Heart right ventricle (tissue), 16 donors: ENCODE measurements at regions of chr3 and their contacts with region 1.

Region 1: DNA sequence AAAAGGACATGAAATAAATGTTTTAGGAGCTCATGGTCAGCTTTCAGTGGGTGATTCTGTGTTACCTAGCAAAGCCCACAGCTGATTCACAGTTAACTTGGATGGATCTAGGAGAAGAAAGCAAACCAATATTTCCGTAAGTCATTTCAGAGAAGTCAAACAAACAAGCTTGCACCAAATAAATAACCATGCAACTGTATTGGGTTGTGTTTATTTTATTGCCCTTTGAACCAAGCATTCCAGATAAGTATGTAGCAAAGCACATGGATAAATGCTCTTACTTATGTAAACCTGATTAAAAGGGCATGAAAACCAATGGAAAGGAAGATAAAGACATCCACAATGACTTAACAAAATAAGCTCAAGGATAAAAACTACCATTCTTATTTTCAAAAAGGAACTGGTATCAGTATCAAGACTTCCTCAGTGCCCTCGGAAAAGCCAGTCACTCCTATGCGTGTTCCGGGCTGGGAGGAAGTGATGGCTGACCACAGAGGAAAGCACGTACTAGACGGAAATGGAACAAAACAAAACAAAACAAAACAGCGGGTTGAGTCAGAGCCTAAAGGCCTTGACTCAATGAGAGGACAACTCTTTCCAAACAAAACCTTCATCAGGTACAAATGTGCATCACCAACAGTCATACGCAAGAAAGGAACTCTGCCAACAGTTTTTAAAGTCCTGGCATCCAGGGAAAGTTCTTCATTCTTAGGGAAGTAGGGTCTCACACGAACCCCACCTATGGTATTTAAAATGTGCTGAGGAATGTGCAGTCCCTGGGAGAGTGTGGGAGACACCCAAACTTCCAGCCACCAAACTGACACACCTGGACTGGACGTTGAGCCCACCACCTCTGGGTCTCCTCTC is 103.3 kb downstream of the SNRK start:
- DNase-seq: peak in 1 of 2 donors; percentile 69
- ATAC-seq: peak; percentile 65 to 85 (median 76)
- H3K4me3 ChIP-seq: no peak overlapping the region
- H3K27ac ChIP-seq: peak overlapping the region; percentile 31 to 93 (median 82)
- H3K4me1 ChIP-seq: peaks cover 3 to 60% (median 41%) of the 10 kb centered on the region in 9 donors
- H3K27me3 ChIP-seq: no peaks in the 10 kb centered on the region
- CTCF ChIP-seq: no peak

Region 2: GRCh38 chr3:43477600-43477999 is 88.0 kb after region 1 on chr3:
- intact Hi-C with region 1: loop called in 1 of 10 experiments (anchors 5 kb)
- DNase-seq: peak; percentile 23 to 52
- ATAC-seq: peak; percentile 76 to 94 (median 88)
- H3K4me3 ChIP-seq: no peak overlapping the region
- H3K27ac ChIP-seq: peak overlapping the region in 9 of 10 donors; percentile 13 to 87 (median 54)
- H3K4me1 ChIP-seq: peaks cover 0 to 34% (median 15%) of the 10 kb centered on the region in 9 donors
- H3K27me3 ChIP-seq: no peaks in the 10 kb centered on the region
- CTCF ChIP-seq: no peak

Region 3: DNA sequence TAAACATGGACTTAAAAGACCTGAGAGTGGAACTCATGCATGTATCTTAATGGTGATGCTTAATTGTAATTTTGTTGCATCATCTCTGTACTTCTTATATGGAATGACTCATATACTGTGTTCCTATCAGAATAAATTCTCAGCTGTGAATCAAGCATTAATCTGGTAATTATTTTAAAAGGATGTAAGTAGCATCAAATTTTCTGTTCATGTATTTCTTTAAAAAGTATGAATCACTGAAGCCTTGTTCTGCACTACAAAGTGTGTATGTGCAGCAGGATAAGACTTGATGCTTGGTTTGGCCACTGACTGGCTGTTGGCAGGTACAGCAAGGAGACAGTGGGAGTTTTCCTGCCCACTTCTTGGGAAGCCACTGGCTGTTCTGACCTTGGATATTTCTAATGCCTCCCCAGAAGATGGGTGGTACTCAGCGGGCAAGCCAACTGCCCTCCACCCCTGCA is 108.3 kb after region 1 on chr3:
- intact Hi-C with region 1: loop called in 3 of 10 experiments (anchors 5 to 10 kb)
- DNase-seq: peak in 1 of 2 donors; percentile 11
- ATAC-seq: peak in 7 of 8 donors; percentile 22 to 56 (median 37)
- H3K4me3 ChIP-seq: no peak overlapping the region
- H3K27ac ChIP-seq: peak overlapping the region in 7 of 10 donors; percentile 9 to 71 (median 51)
- H3K4me1 ChIP-seq: peaks cover 0 to 45% (median 18%) of the 10 kb centered on the region in 9 donors
- H3K27me3 ChIP-seq: no peaks in the 10 kb centered on the region
- CTCF ChIP-seq: no peak